ENCODE measurements at regions of chr1 and their contacts with region 1.

Region 1: GRCh38 chr1:174769961-174770549 is 229.7 kb upstream of the CACYBP start:
- DNase-seq: no peak
- H3K4me3 ChIP-seq: no peak overlapping the region
- H3K27ac ChIP-seq: no peak overlapping the region
- H3K4me1 ChIP-seq: no peaks in the 10 kb centered on the region
- H3K27me3 ChIP-seq: no peaks in the 10 kb centered on the region
- CTCF ChIP-seq: peak; percentile 40 to 61 (median 57)
- POLR2A ChIP-seq: no peak

Region 2: DNA sequence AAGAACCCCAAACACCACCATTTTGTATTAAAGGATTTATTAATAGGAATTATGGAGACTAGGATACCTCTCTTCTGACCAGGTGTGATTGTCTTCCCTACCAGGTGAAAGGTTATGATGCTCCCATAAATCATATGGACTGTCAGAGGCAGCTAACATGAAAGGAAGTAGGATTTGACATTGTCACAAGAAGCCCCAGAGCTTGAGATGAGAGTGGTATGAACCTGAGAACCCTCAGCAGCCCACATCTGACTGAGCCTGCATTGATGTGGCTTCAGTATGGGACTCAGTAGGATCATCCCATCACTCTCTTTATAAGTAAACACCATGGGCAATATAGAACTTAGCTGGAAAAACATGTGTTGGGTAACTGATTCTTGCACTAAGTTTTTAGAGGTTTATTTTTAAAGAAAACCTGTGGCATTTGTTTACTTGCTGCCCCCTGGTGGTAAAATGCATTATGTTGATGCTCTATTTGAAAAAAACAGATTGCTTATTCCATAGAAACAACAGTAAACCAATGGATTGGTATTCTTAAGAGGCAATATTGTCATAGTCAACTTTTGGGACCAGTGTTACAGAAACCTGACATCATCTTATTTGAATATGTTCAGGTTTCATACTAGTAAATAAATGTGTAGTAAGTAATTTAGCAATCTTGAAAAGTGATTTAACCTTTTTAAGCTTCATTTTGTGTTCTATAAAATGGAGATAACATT is 213.1 kb after region 1 on chr1:
- intact Hi-C with region 1: loop called (anchors 10 kb)
- DNase-seq: no peak
- H3K4me3 ChIP-seq: no peak overlapping the region
- H3K27ac ChIP-seq: no peak overlapping the region
- H3K4me1 ChIP-seq: no peaks in the 10 kb centered on the region
- H3K27me3 ChIP-seq: no peaks in the 10 kb centered on the region
- CTCF ChIP-seq: peak in 2 of 3 experiments; percentile 51 to 67
- POLR2A ChIP-seq: no peak